PC-9 (cell line): ENCODE measurements at regions of chr1 and their contacts with region 1.

Region 1: GRCh38 chr1:210448297-210448892 is 119.7 kb downstream of the HHAT start:
- DNase-seq: peak; percentile 19 to 37
- H3K4me3 ChIP-seq: no peak overlapping the region
- H3K27ac ChIP-seq: no peak overlapping the region
- H3K4me1 ChIP-seq: peaks cover 11% of the 10 kb centered on the region; the same call in 1 of the 2 replicates
- H3K27me3 ChIP-seq: no peaks in the 10 kb centered on the region
- CTCF ChIP-seq: peak; percentile 79

Region 2: DNA sequence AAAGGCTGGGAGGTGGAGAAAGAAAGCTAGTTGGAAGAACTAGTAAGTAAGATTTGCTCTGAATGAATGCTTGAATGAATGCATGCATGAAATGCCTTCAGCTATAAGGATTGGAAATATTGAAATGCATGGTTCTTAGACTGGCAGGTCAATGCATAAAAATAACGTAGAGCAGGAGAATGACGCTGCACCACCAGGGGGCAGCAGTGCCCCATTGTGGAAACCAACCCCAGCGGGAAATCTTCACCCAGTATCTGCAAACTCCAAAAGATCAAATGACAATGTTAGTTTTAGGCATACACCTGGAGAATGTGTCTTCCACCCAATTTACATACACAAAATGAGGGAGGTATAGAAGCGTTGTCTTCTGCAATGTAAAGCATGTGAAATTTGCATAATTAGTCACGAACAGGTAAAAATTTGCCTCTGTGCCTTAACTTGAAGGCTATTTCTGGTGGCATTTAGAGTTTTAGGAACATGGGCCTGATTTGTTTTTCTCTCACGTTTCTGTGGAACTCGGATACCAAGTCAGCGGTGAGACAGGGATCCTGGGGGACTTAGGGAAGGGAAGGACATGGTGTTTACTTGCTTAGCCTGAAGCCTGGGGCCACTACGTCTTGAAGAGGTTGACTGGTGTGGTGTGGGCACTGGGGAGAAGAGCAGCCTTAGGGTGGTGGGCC is 41.0 kb before region 1 on chr1:
- CTCF ChIA-PET with region 1: no interaction called
- POLR2A ChIA-PET with region 1: no interaction called
- intact Hi-C with region 1: loop called (anchors 5 kb)
- DNase-seq: peak; percentile 48 to 78
- H3K4me3 ChIP-seq: no peak overlapping the region
- H3K27ac ChIP-seq: no peak overlapping the region
- H3K4me1 ChIP-seq: no peaks in the 10 kb centered on the region
- H3K27me3 ChIP-seq: no peaks in the 10 kb centered on the region
- CTCF ChIP-seq: peak; percentile 95

Region 3: GRCh38 chr1:210584439-210585113 is 136.2 kb after region 1 on chr1:
- CTCF ChIA-PET with region 1: no interaction called
- POLR2A ChIA-PET with region 1: no interaction called
- intact Hi-C with region 1: loop called (anchors 1 kb)
- DNase-seq: peak; percentile 64 to 79
- H3K4me3 ChIP-seq: no peak overlapping the region
- H3K27ac ChIP-seq: no peak overlapping the region
- H3K4me1 ChIP-seq: no peaks in the 10 kb centered on the region
- H3K27me3 ChIP-seq: no peaks in the 10 kb centered on the region
- CTCF ChIP-seq: peak; percentile 88

Region 4: GRCh38 chr1:210951279-210951678 is 502.9 kb after region 1 on chr1:
- CTCF ChIA-PET with region 1: no interaction called
- POLR2A ChIA-PET with region 1: no interaction called
- intact Hi-C with region 1: loop called (anchors 2 kb)
- DNase-seq: no peak
- H3K4me3 ChIP-seq: no peak overlapping the region
- H3K27ac ChIP-seq: no peak overlapping the region
- H3K4me1 ChIP-seq: no peaks in the 10 kb centered on the region
- H3K27me3 ChIP-seq: peaks cover 4% of the 10 kb centered on the region; the same call in 1 of the 2 replicates
- CTCF ChIP-seq: no peak

Region 5: GRCh38 chr1:211133836-211134669 is 685.7 kb after region 1 on chr1 and contains the start of gene KCNH1:
- CTCF ChIA-PET with region 1: interaction called, 5 read pairs
- POLR2A ChIA-PET with region 1: no interaction called
- intact Hi-C with region 1: loop called (anchors 1 kb)
- DNase-seq: peak in 1 of 2 experiments; percentile 81
- H3K4me3 ChIP-seq: peak within 1 kb of the TSS; percentile 4; the same call in 1 of the 2 replicates
- H3K27ac ChIP-seq: no peak within 1 kb of the TSS
- H3K4me1 ChIP-seq: no peaks in the 10 kb centered on the region
- H3K27me3 ChIP-seq: peaks cover 42% of the 10 kb centered on the region
- CTCF ChIP-seq: peak; percentile 69
- total RNA-seq, gene KCNH1: not detected in 2 replicates

Region 6: GRCh38 chr1:211281320-211282022 is 833.1 kb after region 1 on chr1:
- CTCF ChIA-PET with region 1: interaction called, 12 read pairs
- POLR2A ChIA-PET with region 1: no interaction called
- intact Hi-C with region 1: no loop called
- DNase-seq: no peak
- H3K4me3 ChIP-seq: no peak overlapping the region
- H3K27ac ChIP-seq: peak overlapping the region; percentile 29; the same call in 1 of the 2 replicates
- H3K4me1 ChIP-seq: no peaks in the 10 kb centered on the region
- H3K27me3 ChIP-seq: no peaks in the 10 kb centered on the region
- CTCF ChIP-seq: no peak